HepG2 (cell line): ENCODE measurements at regions of chr2 and their contacts with region 1.

Region 1: GRCh38 chr2:219475697-219476651 is 22.7 kb upstream of the GMPPA start:
- DNase-seq: peak; percentile 60
- ATAC-seq: peak; percentile 84
- H3K4me3 ChIP-seq: no peak overlapping the region
- H3K27ac ChIP-seq: no peak overlapping the region
- H3K4me1 ChIP-seq: no peaks in the 10 kb centered on the region
- H3K27me3 ChIP-seq: peaks cover 19 to 82% of the 10 kb centered on the region in 2 experiments
- CTCF ChIP-seq: peak; percentile 93
- EP300 ChIP-seq: no peak
- POLR2A ChIP-seq: no peak
- RAD21 ChIP-seq: peak; percentile 84

Region 2: DNA sequence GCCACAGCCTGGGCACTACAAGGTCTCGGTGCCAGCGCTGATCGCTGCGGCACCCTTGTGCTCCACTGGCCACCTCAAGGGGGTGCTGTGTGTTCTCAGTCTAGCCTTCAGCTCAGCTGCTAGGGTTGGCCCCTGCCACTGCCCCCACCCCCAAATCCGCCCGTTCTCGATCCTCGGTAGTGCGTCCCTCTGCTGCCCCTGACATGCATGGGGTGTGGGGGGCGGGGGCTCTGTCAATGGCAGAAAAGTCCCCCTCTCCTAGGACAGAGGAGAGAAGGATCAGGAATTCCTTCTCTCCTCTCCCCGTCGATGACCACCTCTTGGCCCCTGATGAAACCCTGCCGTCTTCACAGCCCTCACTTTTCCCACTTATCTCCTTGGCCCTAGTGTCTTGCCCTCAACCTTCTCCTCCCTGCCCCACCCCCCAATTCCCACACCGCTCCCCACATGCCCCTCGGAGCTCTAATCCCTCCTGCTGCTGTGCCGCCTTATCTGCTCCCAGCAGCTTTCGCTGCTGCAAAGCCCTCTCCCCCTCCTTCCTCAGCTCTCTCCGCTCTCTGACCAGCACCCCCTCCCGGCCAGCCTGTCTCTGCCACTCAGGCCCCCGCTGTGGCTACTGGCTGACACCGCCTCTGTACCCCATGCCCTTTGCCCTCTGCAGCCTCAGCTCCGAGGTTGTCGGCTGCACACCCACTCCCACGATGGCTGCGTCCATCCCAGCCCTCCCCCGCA is 34.0 kb after region 1 on chr2:
- CTCF ChIA-PET with region 1: interaction called, 11 read pairs
- POLR2A ChIA-PET with region 1: no interaction called
- in situ Hi-C with region 1: no loop called
- intact Hi-C with region 1: no loop called
- DNase-seq: peak; percentile 60
- ATAC-seq: peak; percentile 89
- H3K4me3 ChIP-seq: peak overlapping the region; percentile 52 to 70 (median 53)
- H3K27ac ChIP-seq: no peak overlapping the region
- H3K4me1 ChIP-seq: peaks cover 34% of the 10 kb centered on the region
- H3K27me3 ChIP-seq: peaks cover 14 to 41% of the 10 kb centered on the region in 2 experiments
- CTCF ChIP-seq: peak; percentile 92
- EP300 ChIP-seq: 0 out of 4 replicates have a peak, but pooled peaks of 1 of the 2 experiments have one; percentile 8
- POLR2A ChIP-seq: 0 out of 4 replicates have a peak, but pooled peaks have one; percentile 3 to 45
- RAD21 ChIP-seq: peak; percentile 14; the same call in 1 of the 2 replicates

Region 3: GRCh38 chr2:219521066-219521880 is 45.3 kb after region 1 on chr2:
- CTCF ChIA-PET with region 1: no interaction called
- POLR2A ChIA-PET with region 1: no interaction called
- in situ Hi-C with region 1: loop called (anchors 10 kb)
- intact Hi-C with region 1: loop called (anchors 2 kb)
- DNase-seq: peak; percentile 33
- ATAC-seq: peak; percentile 81
- H3K4me3 ChIP-seq: no peak overlapping the region
- H3K27ac ChIP-seq: no peak overlapping the region
- H3K4me1 ChIP-seq: peaks cover 29% of the 10 kb centered on the region; the same call in 1 of the 2 replicates
- H3K27me3 ChIP-seq: peaks cover 24 to 96% of the 10 kb centered on the region in 2 experiments
- CTCF ChIP-seq: peak; percentile 84
- EP300 ChIP-seq: no peak
- POLR2A ChIP-seq: no peak
- RAD21 ChIP-seq: peak; percentile 23; the same call in 1 of the 2 replicates